ENCODE measurements at regions of chr2 and their contacts with region 1.

Region 1: GRCh38 chr2:20411361-20411894 is 35.4 kb upstream of the RHOB start:
- DNase-seq: peak; percentile 84
- H3K4me3 Mint-ChIP-seq: no peak overlapping the region
- H3K27ac Mint-ChIP-seq: no peak overlapping the region
- H3K4me1 Mint-ChIP-seq: no peaks in the 10 kb centered on the region
- H3K27me3 Mint-ChIP-seq: peaks cover 2% of the 10 kb centered on the region

Region 2: DNA sequence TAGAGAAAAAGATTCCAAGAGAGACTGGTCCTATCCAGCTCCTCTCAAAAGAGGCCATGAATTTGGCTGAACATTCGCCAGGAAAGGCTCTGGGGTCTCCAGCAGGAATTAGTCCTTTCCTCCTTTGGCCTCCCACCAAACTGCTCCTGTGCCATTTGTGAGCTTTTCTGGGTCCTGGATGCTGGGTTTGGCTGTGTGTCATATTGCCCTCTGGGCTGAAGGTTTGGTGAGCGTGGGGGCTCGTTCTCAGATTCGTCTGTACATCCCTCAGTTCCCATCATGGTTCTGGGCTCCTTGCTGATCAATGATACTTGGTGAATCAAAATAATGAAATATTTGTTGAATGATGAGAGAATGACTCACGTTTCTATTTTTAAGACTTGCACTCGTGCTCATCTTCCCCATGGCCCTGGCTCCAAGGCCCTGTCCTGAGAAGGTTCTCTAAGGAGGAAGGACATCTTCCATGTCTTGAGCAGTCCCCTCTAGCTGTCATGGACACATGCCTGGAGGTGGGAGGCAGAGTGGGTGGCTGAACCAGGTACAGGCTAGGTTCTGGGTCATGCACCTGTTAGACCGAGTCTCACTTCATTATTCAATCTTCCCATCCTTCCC is 12.4 kb before region 1 on chr2:
- CTCF ChIA-PET with region 1: interaction called, 16 read pairs
- intact Hi-C with region 1: no loop called
- DNase-seq: no peak
- H3K4me3 Mint-ChIP-seq: no peak overlapping the region
- H3K27ac Mint-ChIP-seq: no peak overlapping the region
- H3K4me1 Mint-ChIP-seq: no peaks in the 10 kb centered on the region
- H3K27me3 Mint-ChIP-seq: peaks cover 2% of the 10 kb centered on the region

Region 3: DNA sequence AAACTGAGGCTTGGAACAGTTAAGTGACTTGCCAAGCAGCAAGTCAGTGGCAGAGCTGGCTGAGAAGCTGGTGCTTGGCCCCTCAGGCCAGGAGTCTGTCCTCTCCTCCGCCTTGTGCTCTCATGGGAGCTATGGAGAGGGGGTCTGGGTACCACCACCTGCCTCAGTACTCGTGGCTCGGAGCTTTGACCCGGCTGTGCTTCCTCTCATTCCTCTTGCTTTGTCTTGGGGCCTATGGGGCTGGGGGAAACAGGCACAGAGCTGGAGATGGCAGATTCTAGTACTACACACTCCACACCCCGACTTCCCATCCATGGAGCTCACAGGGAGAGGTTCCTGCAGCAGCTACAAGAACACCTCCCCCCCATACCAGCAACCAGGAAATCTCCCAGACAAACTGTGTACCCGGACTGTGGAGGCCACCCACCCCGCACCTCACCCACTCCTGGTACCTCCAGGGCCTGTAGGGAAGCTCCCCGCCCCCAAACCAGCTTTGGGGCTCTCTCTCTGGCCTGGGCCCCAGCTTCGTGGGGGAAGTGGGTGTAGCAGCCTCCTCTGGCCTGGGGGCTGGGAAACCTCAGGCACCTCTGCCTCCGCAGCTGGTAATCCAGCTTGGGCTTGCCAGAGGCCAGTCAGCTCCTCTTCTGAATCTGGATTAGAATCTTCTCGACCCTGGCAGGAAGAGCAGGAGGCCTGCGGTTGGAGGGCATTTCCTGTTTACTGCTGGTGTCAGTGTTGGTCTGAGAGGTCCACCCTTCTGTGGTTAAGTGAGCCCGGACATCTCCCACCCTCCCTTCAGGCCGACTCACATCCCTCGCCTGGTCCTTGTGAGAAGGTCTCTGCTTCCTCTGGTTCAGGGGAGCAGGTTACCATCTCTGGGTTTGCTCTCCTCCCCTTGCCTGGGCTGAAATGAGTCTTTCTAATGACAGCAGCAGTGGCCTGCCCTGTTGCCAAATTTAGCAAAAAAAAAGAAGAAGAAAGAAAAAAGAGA is 13.2 kb after region 1 on chr2:
- CTCF ChIA-PET with region 1: interaction called, 54 read pairs
- intact Hi-C with region 1: no loop called
- DNase-seq: peak; percentile 24
- H3K4me3 Mint-ChIP-seq: no peak overlapping the region
- H3K27ac Mint-ChIP-seq: no peak overlapping the region
- H3K4me1 Mint-ChIP-seq: peaks cover 16% of the 10 kb centered on the region
- H3K27me3 Mint-ChIP-seq: no peaks in the 10 kb centered on the region

Region 4: GRCh38 chr2:20438334-20439192 is 27.1 kb after region 1 on chr2:
- CTCF ChIA-PET with region 1: interaction called, 29 read pairs
- intact Hi-C with region 1: no loop called
- DNase-seq: no peak
- H3K4me3 Mint-ChIP-seq: no peak overlapping the region
- H3K27ac Mint-ChIP-seq: no peak overlapping the region
- H3K4me1 Mint-ChIP-seq: no peaks in the 10 kb centered on the region
- H3K27me3 Mint-ChIP-seq: peaks cover 2% of the 10 kb centered on the region

Region 5: DNA sequence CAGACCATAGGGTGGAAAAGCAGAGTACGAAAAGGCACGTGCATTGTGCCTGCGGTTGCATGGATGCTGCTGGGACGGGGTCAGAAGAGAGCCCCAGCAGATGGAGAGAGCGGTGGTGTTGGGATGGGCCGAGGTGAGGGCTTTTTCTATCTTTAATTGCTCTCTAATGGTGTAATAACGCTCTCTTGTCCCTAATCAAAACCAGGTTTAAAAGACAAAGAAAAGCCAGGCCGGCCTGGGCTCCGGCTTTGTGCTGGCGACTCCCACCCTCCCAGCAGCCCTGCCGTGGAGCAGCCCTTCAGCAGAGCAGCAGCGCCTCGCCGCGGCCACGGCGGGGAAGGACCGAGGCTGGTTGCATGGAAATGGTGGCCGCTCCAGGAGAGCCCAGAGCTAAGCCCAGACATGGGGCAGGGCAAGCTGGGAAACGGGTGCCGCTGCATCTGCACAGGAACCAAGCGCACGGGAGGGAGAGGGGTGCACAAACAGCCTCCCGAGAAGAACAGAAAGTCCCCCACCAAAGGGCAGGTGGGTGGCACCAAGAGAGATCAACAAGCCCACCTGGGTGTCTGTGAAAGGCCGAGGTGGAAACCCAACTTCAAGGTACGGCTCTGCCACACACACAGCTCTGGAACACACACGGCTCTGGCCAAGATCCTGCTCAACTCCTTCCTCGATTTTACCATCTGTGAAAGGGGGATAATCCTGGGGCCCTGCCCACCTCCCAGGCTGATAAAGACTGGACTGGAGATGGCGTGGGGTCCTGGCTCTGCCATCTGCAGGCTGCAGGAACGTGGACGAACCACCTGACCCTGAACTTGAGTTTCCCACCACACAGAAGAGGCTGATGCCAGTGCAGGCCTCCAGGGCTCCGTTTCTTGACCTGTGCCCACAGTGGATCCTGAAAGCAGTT is 224.5 kb after region 1 on chr2:
- CTCF ChIA-PET with region 1: interaction called, 47 read pairs
- intact Hi-C with region 1: no loop called
- DNase-seq: peak; percentile 60
- H3K4me3 Mint-ChIP-seq: no peak overlapping the region
- H3K27ac Mint-ChIP-seq: no peak overlapping the region
- H3K4me1 Mint-ChIP-seq: no peaks in the 10 kb centered on the region
- H3K27me3 Mint-ChIP-seq: no peaks in the 10 kb centered on the region

Measured in activated naive CD4-positive, alpha-beta T cell treated with anti-CD3 and anti-CD28 coated beads for 36 hours (primary cell).